Activated naive CD4-positive, alpha-beta T cell treated with anti-CD3 and anti-CD28 coated beads, Interleukin-2, amount 10 ng/mL, durations not matched to agents 7 days and 5 days (primary cell): ENCODE measurements at regions of chr17 and their contacts with region 1.

Region 1: GRCh38 chr17:65137021-65137991 is at the start of gene RGS9:
- DNase-seq: peak; percentile 88
- H3K4me3 Mint-ChIP-seq: peak within 1 kb of the TSS; percentile 68
- H3K27ac Mint-ChIP-seq: no peak within 1 kb of the TSS
- H3K4me1 Mint-ChIP-seq: peaks cover 33% of the 10 kb centered on the region
- H3K27me3 Mint-ChIP-seq: peaks cover 82% of the 10 kb centered on the region

Region 2: DNA sequence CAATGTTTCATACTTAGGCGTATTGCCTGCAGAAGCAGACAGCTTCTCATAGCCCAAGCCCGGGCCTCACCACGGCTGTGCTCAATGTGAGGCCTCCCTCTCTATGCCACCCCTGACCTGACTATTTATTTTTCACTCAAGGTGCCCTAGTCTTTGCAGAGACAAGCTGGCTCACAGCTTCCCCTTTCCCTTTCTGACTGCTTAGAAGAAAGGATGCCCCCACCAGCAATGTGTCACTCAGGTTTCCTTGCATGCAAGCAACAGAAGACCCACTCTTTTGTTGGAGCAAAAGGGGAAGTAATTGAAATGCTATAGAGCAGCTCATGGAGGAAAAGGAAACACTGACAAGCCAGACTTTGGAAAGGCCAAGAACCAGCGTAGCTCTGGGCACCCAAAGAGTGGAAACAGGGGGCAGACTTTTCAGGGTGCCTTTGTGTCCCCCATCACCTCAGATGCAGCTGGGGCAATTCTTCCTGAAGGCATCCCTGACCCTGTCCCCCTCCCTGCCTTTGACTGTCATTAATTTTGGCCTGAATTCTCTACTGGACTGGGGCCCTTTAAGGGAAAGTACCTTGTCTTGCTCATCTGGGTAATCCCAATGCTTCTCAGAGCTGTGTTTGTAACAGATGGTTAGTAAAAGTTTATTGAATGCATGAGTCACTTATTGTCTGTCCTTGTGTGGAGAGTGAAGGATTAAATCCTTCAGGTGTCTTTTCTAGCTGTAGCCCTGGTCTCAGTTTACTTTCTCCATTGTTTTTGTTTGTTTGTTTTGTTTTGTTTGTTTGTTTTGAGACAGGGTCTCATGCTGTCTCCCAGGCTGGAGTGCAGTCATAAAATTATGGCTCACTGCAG is 17.7 kb after region 1 on chr17:
- CTCF ChIA-PET with region 1: interaction called, 11 read pairs
- DNase-seq: no peak
- H3K4me3 Mint-ChIP-seq: no peak overlapping the region
- H3K27ac Mint-ChIP-seq: no peak overlapping the region
- H3K4me1 Mint-ChIP-seq: peaks cover 4% of the 10 kb centered on the region
- H3K27me3 Mint-ChIP-seq: peaks cover 48% of the 10 kb centered on the region

Region 3: GRCh38 chr17:65181237-65182061 is 44.1 kb after region 1 on chr17:
- CTCF ChIA-PET with region 1: interaction called, 12 read pairs
- DNase-seq: no peak
- H3K4me3 Mint-ChIP-seq: no peak overlapping the region
- H3K27ac Mint-ChIP-seq: peak overlapping the region; percentile 17
- H3K4me1 Mint-ChIP-seq: peaks cover 63% of the 10 kb centered on the region
- H3K27me3 Mint-ChIP-seq: peaks cover 19% of the 10 kb centered on the region